ENCODE measurements at regions of chr15 and their contacts with region 1.

Region 1: GRCh38 chr15:40906091-40906990 is 12.1 kb downstream of the VPS18 start:
- DNase-seq: peak; percentile 88 to 94
- ATAC-seq: peak; percentile 69 to 77
- H3K4me3 ChIP-seq: peak overlapping the region; percentile 56 to 62 (median 60)
- H3K27ac ChIP-seq: peak overlapping the region; percentile 91 to 94 (median 93)
- H3K4me1 ChIP-seq: peaks cover 34 to 42% of the 10 kb centered on the region in 2 donors
- H3K27me3 ChIP-seq: no peaks in the 10 kb centered on the region
- CTCF ChIP-seq: peak; percentile 91 to 97 (median 94)
- POLR2A ChIP-seq: peak; percentile 54 to 58

Region 2: DNA sequence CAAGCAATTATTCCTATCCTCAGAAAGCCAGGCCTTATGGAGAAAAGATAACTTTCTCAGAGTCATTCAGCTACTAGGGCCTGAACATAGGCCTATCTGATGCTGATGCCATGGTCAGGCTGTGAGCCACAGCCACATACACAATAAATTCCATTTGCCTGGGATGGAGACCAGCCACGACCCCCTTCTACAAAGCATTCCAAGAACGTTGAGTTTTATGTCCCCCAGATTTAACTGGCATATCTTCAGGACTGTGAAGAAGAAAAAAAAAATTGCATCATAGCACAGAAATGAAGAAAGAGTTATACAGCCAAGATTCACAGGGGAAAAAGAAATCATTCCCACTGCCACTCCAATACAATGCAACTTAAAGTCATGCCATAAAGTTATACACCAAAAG is 1225.5 kb before region 1 on chr15:
- in situ Hi-C with region 1: no loop called
- intact Hi-C with region 1: no loop called
- DNase-seq: no peak
- ATAC-seq: no peak
- H3K4me3 ChIP-seq: no peak overlapping the region
- H3K27ac ChIP-seq: no peak overlapping the region
- H3K4me1 ChIP-seq: no peaks in the 10 kb centered on the region
- H3K27me3 ChIP-seq: no peaks in the 10 kb centered on the region
- CTCF ChIP-seq: no peak
- POLR2A ChIP-seq: no peak

Region 3: GRCh38 chr15:40952901-40953712 is 46.8 kb after region 1 on chr15 and contains the start of gene CHAC1:
- in situ Hi-C with region 1: no loop called
- intact Hi-C with region 1: loop called (anchors 2 kb)
- DNase-seq: peak; percentile 95 to 98
- ATAC-seq: peak; percentile 55 to 57
- H3K4me3 ChIP-seq: peak within 1 kb of the TSS; percentile 76 to 96 (median 87)
- H3K27ac ChIP-seq: peak within 1 kb of the TSS; percentile 91 to 99 (median 96)
- H3K4me1 ChIP-seq: peaks cover 40 to 56% of the 10 kb centered on the region in 2 donors
- H3K27me3 ChIP-seq: no peaks in the 10 kb centered on the region
- CTCF ChIP-seq: peak in 1 of 5 experiments; percentile 13
- POLR2A ChIP-seq: peak; percentile 97 to 99
- total RNA-seq, gene CHAC1: 93.4 to 320 (median 139) TPM

Region 4: DNA sequence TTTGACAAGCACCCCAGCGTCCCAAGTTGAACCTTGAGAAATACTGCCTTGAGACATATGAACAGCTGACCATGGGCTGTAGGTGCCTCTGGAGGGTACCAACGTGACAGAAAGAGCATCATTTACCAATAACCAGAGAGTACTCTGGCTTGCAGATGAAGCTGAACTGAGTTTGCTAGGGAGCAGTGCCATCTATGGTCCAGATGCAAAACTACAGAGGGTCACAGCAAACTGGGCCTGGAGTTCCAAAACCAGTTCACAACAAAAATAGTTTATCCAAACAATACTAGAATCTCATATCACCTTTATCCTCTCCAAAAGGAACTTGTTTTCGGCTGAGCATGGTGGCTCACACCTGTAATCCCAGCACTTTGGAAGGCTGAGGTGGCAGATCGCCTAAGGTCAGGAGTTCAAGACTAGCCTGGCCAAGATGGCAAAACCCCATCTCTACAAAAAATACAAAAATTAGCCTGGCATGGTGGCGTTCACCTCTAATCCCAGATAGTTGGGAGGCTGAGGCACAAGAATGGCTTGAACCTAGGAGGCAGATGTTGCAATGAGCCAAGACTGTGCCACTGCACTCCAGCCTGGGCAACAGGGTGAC is 116.2 kb after region 1 on chr15:
- in situ Hi-C with region 1: loop called (anchors 5 to 10 kb)
- intact Hi-C with region 1: loop called (anchors 1 kb)
- DNase-seq: peak in 1 of 2 donors; percentile 17
- ATAC-seq: peak in 1 of 2 donors; percentile 62
- H3K4me3 ChIP-seq: no peak overlapping the region
- H3K27ac ChIP-seq: no peak overlapping the region
- H3K4me1 ChIP-seq: peaks cover 6 to 13% of the 10 kb centered on the region in 2 donors
- H3K27me3 ChIP-seq: no peaks in the 10 kb centered on the region
- CTCF ChIP-seq: peak; percentile 45 to 74 (median 60)
- POLR2A ChIP-seq: no peak

Region 5: DNA sequence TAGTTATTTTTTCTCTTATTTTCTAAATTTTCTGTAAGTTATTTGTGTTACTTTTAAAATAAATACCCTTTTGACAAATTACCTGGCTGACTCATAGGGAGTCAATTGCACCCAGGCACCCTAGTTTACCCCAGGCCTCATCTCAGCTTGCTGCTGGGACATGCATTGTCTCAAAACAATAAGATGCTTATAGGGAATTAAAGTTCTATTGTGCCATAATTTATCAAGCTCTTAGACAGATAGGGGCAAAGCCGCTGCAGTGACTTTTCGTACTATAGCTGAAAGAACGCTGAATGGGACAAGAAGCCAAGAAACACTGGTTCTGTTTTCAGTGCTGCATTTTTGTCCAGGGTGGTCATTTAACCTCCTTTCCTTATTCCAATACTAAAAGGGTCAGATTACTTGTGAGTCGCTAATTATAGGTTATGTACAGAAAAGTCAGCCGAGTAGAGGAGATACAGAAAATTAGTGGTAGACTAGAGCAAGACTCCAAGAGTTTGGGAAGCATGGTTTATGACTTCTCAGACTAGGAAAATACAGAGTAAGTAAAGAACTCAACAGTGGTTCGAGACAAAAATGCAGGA is 274.0 kb after region 1 on chr15:
- in situ Hi-C with region 1: loop called in 3 of 4 experiments (anchors 5 to 10 kb)
- intact Hi-C with region 1: loop called (anchors 1 kb)
- DNase-seq: no peak
- ATAC-seq: no peak
- H3K4me3 ChIP-seq: no peak overlapping the region
- H3K27ac ChIP-seq: no peak overlapping the region
- H3K4me1 ChIP-seq: no peaks in the 10 kb centered on the region
- H3K27me3 ChIP-seq: no peaks in the 10 kb centered on the region
- CTCF ChIP-seq: no peak
- POLR2A ChIP-seq: no peak

Region 6: DNA sequence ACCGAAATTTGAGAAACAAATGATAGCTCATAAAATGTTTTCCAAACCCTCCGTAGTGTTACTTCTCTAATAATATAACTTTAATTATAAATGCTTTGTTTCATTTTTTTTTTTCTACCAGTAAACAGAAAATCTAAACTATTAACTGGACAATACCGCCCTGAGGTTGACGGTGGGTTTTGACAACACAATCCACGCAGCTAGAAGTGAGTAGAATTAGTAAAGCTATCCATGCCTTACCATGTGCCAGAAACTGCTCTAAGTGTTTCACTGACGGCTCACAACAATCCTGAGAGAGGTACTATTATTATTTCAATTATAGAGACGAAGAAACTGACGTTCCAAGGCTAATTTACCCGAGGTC is 495.5 kb after region 1 on chr15:
- in situ Hi-C with region 1: no loop called
- intact Hi-C with region 1: loop called (anchors 5 kb)
- DNase-seq: no peak
- ATAC-seq: peak; percentile 28 to 32
- H3K4me3 ChIP-seq: peak overlapping the region; percentile 81 to 98 (median 89)
- H3K27ac ChIP-seq: peak overlapping the region; percentile 83 to 95 (median 92)
- H3K4me1 ChIP-seq: peaks cover 9 to 20% of the 10 kb centered on the region in 2 donors
- H3K27me3 ChIP-seq: no peaks in the 10 kb centered on the region
- CTCF ChIP-seq: no peak
- POLR2A ChIP-seq: no peak

Measured in gastrocnemius medialis (tissue), 4 donors.